ENCODE measurements at regions of chr6 and their contacts with region 1.

Region 1: GRCh38 chr6:41278699-41279405 is 7.6 kb downstream of the TREM1 start:
- DNase-seq: peak; percentile 84
- ATAC-seq: peak; percentile 66
- H3K4me3 ChIP-seq: no peak overlapping the region
- H3K4me3 Mint-ChIP-seq: peak overlapping the region; percentile 21
- H3K27ac ChIP-seq: no peak overlapping the region
- H3K27ac Mint-ChIP-seq: peak overlapping the region; percentile 35
- H3K4me1 ChIP-seq: peaks cover 29 to 44% of the 10 kb centered on the region in 2 donors
- H3K4me1 Mint-ChIP-seq: peaks cover 43% of the 10 kb centered on the region
- H3K27me3 ChIP-seq: no peaks in the 10 kb centered on the region
- H3K27me3 Mint-ChIP-seq: peaks cover 5% of the 10 kb centered on the region
- CTCF ChIP-seq: peak; percentile 79

Region 2: DNA sequence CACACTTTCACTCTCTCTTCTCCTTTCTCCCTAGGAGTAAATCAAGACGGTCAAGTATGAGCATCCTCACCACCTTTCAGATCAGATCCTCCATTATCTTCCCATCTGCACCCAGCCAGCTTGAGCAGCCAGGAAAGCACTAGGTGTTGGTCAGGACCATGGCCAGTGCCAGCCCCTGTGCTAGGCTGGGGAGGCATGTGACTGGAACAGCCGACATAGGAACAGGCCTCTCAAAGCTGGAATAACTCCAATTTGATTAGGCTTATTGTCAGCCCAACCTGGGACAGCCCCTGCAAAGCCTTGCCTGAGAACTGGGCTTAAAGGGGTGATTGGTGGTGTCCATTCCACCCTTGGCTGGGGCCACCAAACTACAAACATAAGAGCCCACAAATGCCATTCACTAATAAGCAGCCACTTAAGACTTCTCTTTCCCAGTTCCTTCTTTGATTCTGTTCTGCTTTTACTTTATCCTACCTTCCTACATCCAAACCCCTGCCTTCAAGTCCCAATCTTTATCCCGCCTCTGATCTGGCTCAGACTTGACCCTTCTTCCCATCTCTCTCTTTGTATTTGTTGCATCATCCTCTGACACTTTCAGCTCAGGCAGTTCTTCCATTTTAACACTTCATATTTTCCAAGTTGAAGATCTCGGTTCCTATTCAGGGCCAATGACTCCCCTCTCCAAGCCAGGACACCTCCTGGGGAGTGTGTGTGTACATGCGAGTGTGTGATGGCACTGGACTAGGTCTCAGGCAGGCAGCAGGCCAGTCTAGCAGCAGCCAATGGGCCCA is 111.5 kb before region 1 on chr6:
- CTCF ChIA-PET with region 1: interaction called, 10 read pairs
- POLR2A ChIA-PET with region 1: no interaction called
- intact Hi-C with region 1: no loop called
- DNase-seq: no peak
- ATAC-seq: no peak
- H3K4me3 ChIP-seq: no peak overlapping the region
- H3K4me3 Mint-ChIP-seq: no peak overlapping the region
- H3K27ac ChIP-seq: no peak overlapping the region
- H3K27ac Mint-ChIP-seq: no peak overlapping the region
- H3K4me1 ChIP-seq: peaks cover 2 to 7% of the 10 kb centered on the region in 2 donors
- H3K4me1 Mint-ChIP-seq: peaks cover 8% of the 10 kb centered on the region
- H3K27me3 ChIP-seq: no peaks in the 10 kb centered on the region
- H3K27me3 Mint-ChIP-seq: peaks cover 11% of the 10 kb centered on the region
- CTCF ChIP-seq: no peak

Region 3: GRCh38 chr6:41200296-41200900 is 78.5 kb before region 1 on chr6:
- CTCF ChIA-PET with region 1: interaction called, 8 read pairs
- POLR2A ChIA-PET with region 1: no interaction called
- intact Hi-C with region 1: loop called (anchors 2 kb)
- DNase-seq: peak; percentile 71
- ATAC-seq: peak; percentile 35
- H3K4me3 ChIP-seq: peak overlapping the region; percentile 46 to 62 (median 60)
- H3K4me3 Mint-ChIP-seq: peak overlapping the region; percentile 73
- H3K27ac ChIP-seq: peak overlapping the region; percentile 90 to 94
- H3K27ac Mint-ChIP-seq: peak overlapping the region; percentile 97
- H3K4me1 ChIP-seq: peaks cover 75 to 79% of the 10 kb centered on the region in 2 donors
- H3K4me1 Mint-ChIP-seq: peaks cover 81% of the 10 kb centered on the region
- H3K27me3 ChIP-seq: no peaks in the 10 kb centered on the region
- H3K27me3 Mint-ChIP-seq: no peaks in the 10 kb centered on the region
- CTCF ChIP-seq: no peak

Region 4: DNA sequence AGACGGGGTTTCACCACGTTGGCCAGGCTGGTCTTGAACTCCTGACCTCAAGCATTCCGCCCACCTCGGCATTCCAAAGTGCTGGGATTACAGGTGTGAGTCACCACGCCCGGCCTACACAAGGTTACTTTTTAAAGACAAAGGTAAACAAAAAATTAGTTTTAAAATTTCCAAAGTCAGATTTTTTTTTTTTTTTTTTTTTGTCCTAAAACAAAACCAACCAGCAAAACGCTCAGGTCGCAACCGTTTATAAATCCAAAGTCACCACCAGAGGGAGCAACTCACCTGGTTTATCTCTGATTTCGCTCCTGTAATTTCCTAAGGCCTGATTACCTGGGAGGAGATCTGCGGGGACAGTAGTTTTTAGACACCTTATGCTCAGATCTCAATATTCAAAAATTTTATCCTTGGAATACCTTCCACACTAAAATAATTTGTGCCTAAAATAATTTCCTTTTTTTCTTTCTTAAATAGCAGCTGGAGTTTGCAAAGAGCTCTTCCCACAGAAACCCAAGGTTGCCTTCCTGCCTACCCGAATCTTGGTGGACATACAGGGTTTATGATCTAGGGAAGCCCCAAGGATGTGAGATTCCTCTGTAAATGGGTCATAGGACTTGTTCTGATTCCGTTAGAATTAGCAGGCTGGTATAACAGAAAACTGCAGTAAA is 27.5 kb after region 1 on chr6:
- CTCF ChIA-PET with region 1: interaction called, 29 read pairs
- POLR2A ChIA-PET with region 1: interaction called, 5 read pairs
- intact Hi-C with region 1: loop called (anchors 1 kb)
- DNase-seq: peak; percentile 76
- ATAC-seq: peak; percentile 39
- H3K4me3 ChIP-seq: no peak overlapping the region
- H3K4me3 Mint-ChIP-seq: no peak overlapping the region
- H3K27ac ChIP-seq: no peak overlapping the region
- H3K27ac Mint-ChIP-seq: no peak overlapping the region
- H3K4me1 ChIP-seq: peaks cover 21 to 30% of the 10 kb centered on the region in 2 donors
- H3K4me1 Mint-ChIP-seq: peaks cover 36% of the 10 kb centered on the region
- H3K27me3 ChIP-seq: no peaks in the 10 kb centered on the region
- H3K27me3 Mint-ChIP-seq: no peaks in the 10 kb centered on the region
- CTCF ChIP-seq: peak; percentile 87

Region 5: DNA sequence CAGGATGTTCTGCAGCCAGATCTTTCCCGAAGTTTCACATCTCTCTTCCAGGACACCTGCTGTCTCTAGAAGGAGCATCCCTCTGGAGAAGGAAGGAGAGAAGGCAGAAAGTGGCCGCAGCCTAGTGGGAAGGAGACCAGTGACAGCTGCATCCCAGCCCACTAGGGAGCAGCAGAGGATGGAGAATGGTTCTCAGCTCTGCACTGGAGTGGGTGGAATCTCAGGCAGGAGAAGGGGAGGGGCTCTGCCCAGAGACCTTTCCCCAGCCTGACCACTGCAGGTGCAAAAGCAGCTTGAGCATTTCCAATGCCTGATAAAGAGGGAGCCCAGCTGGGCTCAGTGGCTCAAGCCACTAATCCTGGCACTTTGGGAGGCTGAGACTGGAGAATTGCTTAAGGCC is 88.8 kb after region 1 on chr6:
- CTCF ChIA-PET with region 1: interaction called, 13 read pairs
- POLR2A ChIA-PET with region 1: no interaction called
- intact Hi-C with region 1: no loop called
- DNase-seq: no peak
- ATAC-seq: no peak
- H3K4me3 ChIP-seq: no peak overlapping the region
- H3K4me3 Mint-ChIP-seq: no peak overlapping the region
- H3K27ac ChIP-seq: no peak overlapping the region
- H3K27ac Mint-ChIP-seq: no peak overlapping the region
- H3K4me1 ChIP-seq: peaks cover 16 to 23% of the 10 kb centered on the region in 2 donors
- H3K4me1 Mint-ChIP-seq: peaks cover 22% of the 10 kb centered on the region
- H3K27me3 ChIP-seq: peaks cover 2 to 53% (median 23%) of the 10 kb centered on the region in 4 experiments
- H3K27me3 Mint-ChIP-seq: peaks cover 55% of the 10 kb centered on the region
- CTCF ChIP-seq: no peak